Right ventricle myocardium inferior (tissue), 1 donor: ENCODE measurements at regions of chr19 and their contacts with region 1.

Region 1: GRCh38 chr19:21482863-21483276 is 22.5 kb upstream of the ZNF429 start:
- DNase-seq: peak; percentile 73
- ATAC-seq: peak; percentile 83

Region 2: DNA sequence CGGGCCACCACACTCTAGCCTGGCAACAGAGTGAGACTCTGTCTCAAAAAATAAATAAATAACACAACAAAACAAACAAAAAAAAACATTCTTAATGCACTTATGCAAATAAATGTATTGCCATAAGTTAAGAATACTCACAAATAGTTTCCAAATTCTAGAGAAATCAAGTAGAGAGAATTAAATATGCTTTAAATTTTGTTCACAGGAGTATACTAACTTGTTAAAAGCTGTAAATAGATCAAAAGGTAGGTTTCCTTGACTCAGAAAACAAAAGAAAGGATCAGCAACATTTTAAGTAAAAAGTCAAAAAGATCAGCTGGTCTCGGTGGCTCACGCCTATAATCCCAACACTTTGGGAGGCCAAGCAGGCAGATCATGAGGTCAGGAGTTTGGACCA is 28.0 kb before region 1 on chr19:
- intact Hi-C with region 1: no loop called
- DNase-seq: no peak
- ATAC-seq: no peak

Region 3: GRCh38 chr19:21566073-21566472 is 83.2 kb after region 1 on chr19:
- intact Hi-C with region 1: no loop called
- DNase-seq: no peak
- ATAC-seq: no peak

Region 4: GRCh38 chr19:21698215-21698614 is 215.3 kb after region 1 on chr19:
- intact Hi-C with region 1: loop called (anchors 2 kb)
- DNase-seq: no peak
- ATAC-seq: no peak